IMR-90 (cell line): ENCODE measurements at regions of chr3 and their contacts with region 1.

Region 1: GRCh38 chr3:141738022-141738890 is at the start of gene RNF7:
- DNase-seq: peak; percentile 93
- ATAC-seq: peak; percentile 96
- H3K4me3 ChIP-seq: peak within 1 kb of the TSS; percentile 86
- H3K27ac ChIP-seq: peak within 1 kb of the TSS; percentile 97
- H3K4me1 ChIP-seq: peaks cover 9% of the 10 kb centered on the region
- H3K27me3 ChIP-seq: no peaks in the 10 kb centered on the region
- CTCF ChIP-seq: peak; percentile 98
- POLR2A ChIP-seq: peak; percentile 68
- RAD21 ChIP-seq: peak; percentile 73
- total RNA-seq, gene RNF7: 111 and 149 TPM in 2 replicates

Region 2: DNA sequence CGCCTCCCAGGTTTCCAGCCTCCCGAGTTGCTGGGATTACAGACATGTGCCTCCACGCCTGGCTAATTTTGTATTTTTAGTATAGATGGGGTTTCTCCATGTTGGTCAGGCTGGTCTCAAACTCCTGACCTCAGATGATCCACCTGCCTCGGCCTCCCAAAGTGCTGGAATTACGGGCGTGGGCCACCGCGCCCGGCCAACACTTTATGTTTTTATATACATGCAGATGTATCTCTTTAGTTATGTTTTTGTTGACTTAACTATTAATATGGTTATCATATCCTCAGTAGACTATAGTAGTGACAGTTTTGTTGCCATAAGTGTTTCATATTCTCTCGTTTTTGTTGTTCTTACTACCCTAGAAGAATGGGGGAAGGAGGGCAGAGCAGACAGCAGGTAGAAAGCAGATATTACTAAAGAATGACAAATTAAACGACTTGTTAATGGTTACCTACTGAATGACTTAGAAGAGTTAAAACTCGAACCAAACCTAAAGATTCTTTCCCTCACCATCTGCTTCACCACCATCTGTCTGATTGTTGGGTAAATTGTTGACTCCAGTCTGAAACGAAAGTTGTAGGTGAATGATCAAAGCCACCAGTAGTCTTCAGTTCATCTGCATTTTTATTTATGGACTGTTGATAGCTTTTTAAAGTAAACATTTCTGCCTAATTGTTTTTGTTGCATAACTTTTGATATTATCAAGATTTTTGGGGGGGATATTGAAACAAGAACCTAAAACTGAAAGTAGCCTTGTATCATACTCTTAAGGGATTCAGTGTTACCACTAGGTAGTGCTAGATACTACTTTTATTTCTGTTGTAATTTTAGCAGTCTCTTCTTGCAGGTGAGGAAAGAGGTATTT is 162.1 kb before region 1 on chr3:
- CTCF ChIA-PET with region 1: no interaction called
- POLR2A ChIA-PET with region 1: no interaction called
- dilution Hi-C with region 1: no loop called
- in situ Hi-C with region 1: no loop called
- intact Hi-C with region 1: loop called (anchors 1 kb)
- DNase-seq: peak; percentile 40
- ATAC-seq: peak; percentile 79
- H3K4me3 ChIP-seq: no peak overlapping the region
- H3K27ac ChIP-seq: no peak overlapping the region
- H3K4me1 ChIP-seq: peaks cover 2% of the 10 kb centered on the region; the same call in 1 of the 2 replicates
- H3K27me3 ChIP-seq: no peaks in the 10 kb centered on the region
- CTCF ChIP-seq: peak; percentile 55
- POLR2A ChIP-seq: no peak
- RAD21 ChIP-seq: peak; percentile 56

Region 3: GRCh38 chr3:141644931-141645330 is 93.3 kb before region 1 on chr3:
- CTCF ChIA-PET with region 1: no interaction called
- POLR2A ChIA-PET with region 1: no interaction called
- dilution Hi-C with region 1: no loop called
- in situ Hi-C with region 1: no loop called
- intact Hi-C with region 1: loop called (anchors 5 kb)
- DNase-seq: peak; percentile 51
- ATAC-seq: peak; percentile 79
- H3K4me3 ChIP-seq: no peak overlapping the region
- H3K27ac ChIP-seq: no peak overlapping the region
- H3K4me1 ChIP-seq: no peaks in the 10 kb centered on the region
- H3K27me3 ChIP-seq: no peaks in the 10 kb centered on the region
- CTCF ChIP-seq: peak; percentile 56
- POLR2A ChIP-seq: no peak
- RAD21 ChIP-seq: peak; percentile 47

Region 4: GRCh38 chr3:141686466-141687291 is 51.6 kb before region 1 on chr3:
- CTCF ChIA-PET with region 1: no interaction called
- POLR2A ChIA-PET with region 1: no interaction called
- dilution Hi-C with region 1: no loop called
- in situ Hi-C with region 1: no loop called
- intact Hi-C with region 1: loop called (anchors 2 kb)
- DNase-seq: peak; percentile 72
- ATAC-seq: peak; percentile 74
- H3K4me3 ChIP-seq: peak overlapping the region; percentile 44
- H3K27ac ChIP-seq: peak overlapping the region; percentile 65; the same call in 1 of the 2 replicates
- H3K4me1 ChIP-seq: peaks cover 14% of the 10 kb centered on the region
- H3K27me3 ChIP-seq: no peaks in the 10 kb centered on the region
- CTCF ChIP-seq: no peak
- POLR2A ChIP-seq: no peak
- RAD21 ChIP-seq: no peak

Region 5: DNA sequence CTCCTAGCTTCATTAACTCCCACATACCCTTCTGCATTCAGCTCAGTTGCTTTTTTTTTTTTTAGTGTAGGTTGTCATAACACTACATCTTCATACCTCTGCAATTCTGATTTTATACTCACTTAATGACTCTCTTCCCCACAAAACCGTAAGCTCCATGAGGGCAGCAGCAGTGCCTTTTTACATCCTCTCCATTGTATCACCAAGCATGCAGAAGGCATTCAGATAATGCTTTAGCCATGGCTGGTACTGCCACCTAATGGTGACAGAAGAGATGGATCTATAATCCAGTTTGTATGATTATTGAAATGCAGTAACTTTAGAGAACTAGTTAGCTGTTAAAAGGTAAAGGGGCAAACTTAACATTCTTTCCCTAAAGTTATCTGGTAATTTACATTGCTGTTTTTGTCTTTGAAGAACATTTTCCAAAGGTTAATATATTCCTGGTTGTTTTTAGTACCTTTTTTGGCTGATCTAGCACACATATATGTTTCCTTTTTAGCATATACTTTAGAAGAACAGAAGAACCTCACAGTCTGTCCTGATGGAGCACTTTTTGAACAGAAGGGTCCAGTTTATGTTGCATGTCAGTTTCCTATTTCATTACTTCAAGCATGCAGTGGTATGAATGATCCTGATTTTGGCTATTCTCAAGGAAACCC is 175.0 kb after region 1 on chr3:
- CTCF ChIA-PET with region 1: interaction called, 3 read pairs
- POLR2A ChIA-PET with region 1: no interaction called
- dilution Hi-C with region 1: no loop called
- in situ Hi-C with region 1: no loop called
- intact Hi-C with region 1: loop called (anchors 1 kb)
- DNase-seq: peak; percentile 62
- ATAC-seq: peak; percentile 64
- H3K4me3 ChIP-seq: no peak overlapping the region
- H3K27ac ChIP-seq: no peak overlapping the region
- H3K4me1 ChIP-seq: peaks cover 2% of the 10 kb centered on the region
- H3K27me3 ChIP-seq: no peaks in the 10 kb centered on the region
- CTCF ChIP-seq: peak; percentile 61
- POLR2A ChIP-seq: no peak
- RAD21 ChIP-seq: peak; percentile 76

Region 6: GRCh38 chr3:142279965-142280590 is 541.8 kb after region 1 on chr3:
- CTCF ChIA-PET with region 1: no interaction called
- POLR2A ChIA-PET with region 1: no interaction called
- dilution Hi-C with region 1: no loop called
- in situ Hi-C with region 1: no loop called
- intact Hi-C with region 1: loop called (anchors 5 kb)
- DNase-seq: peak; percentile 80
- ATAC-seq: peak; percentile 73
- H3K4me3 ChIP-seq: no peak overlapping the region
- H3K27ac ChIP-seq: no peak overlapping the region
- H3K4me1 ChIP-seq: peaks cover 7% of the 10 kb centered on the region; the same call in 1 of the 2 replicates
- H3K27me3 ChIP-seq: no peaks in the 10 kb centered on the region
- CTCF ChIP-seq: peak; percentile 80
- POLR2A ChIP-seq: no peak
- RAD21 ChIP-seq: peak; percentile 93

Region 7: DNA sequence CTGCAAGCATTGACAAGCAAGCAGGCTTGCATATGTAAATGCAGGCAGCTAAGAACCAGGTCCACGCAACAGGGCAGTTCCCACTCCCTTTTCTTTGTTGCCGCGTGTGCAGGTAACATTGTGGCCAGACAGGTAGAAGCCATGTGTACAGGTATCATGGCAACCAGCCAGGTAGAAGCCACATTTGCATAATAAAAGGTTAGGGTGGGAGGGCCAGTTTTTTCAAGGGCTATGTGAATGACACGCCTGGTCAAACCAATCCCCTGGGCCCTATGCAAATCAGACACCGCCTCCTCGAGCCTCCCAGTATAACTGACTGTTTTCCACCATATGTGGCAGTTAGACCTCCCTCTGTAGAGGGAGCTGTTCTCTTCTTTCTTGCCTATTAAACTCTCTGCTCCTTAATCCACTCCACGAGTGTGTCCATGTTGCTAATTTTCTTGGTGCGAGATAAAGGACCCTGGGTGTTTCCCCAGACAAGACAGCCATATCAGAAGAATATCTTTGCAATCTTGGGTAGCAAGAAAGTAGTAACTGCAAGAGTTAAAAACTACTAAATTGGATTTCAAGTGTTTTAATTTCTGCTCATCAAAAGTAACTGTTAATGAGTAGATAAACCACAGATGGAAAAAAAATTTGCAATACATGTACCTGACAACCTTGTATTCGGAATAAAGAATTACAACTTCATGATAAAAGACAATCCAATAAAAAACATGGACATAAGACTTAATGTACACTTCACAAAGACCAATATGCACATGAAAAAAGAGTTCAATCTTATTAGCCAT is 1128.8 kb after region 1 on chr3:
- CTCF ChIA-PET with region 1: no interaction called
- POLR2A ChIA-PET with region 1: no interaction called
- dilution Hi-C with region 1: no loop called
- in situ Hi-C with region 1: no loop called
- intact Hi-C with region 1: no loop called
- DNase-seq: no peak
- ATAC-seq: no peak
- H3K4me3 ChIP-seq: no peak overlapping the region
- H3K27ac ChIP-seq: no peak overlapping the region
- H3K4me1 ChIP-seq: no peaks in the 10 kb centered on the region
- H3K27me3 ChIP-seq: peaks cover 3% of the 10 kb centered on the region
- CTCF ChIP-seq: no peak
- POLR2A ChIP-seq: no peak
- RAD21 ChIP-seq: no peak